ENCODE measurements at regions of chr14 and their contacts with region 1.

Region 1: DNA sequence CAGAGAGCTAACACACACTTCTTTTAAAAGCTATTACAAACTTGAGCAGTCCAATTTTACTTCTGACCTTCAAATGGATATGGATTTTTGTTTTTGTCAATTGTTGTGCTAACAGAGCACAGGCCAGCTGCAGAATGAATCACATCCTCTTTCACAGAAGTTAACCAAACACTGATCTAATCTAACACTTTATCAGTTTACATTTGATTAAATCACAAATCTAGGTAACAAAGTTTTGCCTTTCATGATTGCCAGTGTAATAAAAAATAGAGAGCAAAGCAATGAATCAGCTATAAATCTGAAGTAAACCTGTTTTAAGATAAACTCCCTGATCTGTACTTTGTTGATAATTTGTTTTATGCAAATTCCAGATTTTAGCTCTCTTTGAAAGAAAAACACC is 273.1 kb upstream of the RGS6 start:
- DNase-seq: peak; percentile 90
- H3K4me3 ChIP-seq: peak overlapping the region in 1 of 3 experiments; percentile 32
- H3K27ac ChIP-seq: peak overlapping the region; percentile 79
- H3K4me1 ChIP-seq: peaks cover 24% of the 10 kb centered on the region
- H3K27me3 ChIP-seq: no peaks in the 10 kb centered on the region
- CTCF ChIP-seq: no peak
- POLR2A ChIP-seq: no peak

Region 2: GRCh38 chr14:71539650-71540285 is 119.4 kb before region 1 on chr14:
- CTCF ChIA-PET with region 1: no interaction called
- POLR2A ChIA-PET with region 1: no interaction called
- dilution Hi-C with region 1: no loop called
- intact Hi-C with region 1: loop called (anchors 5 kb)
- DNase-seq: peak; percentile 59
- H3K4me3 ChIP-seq: no peak overlapping the region
- H3K27ac ChIP-seq: no peak overlapping the region
- H3K4me1 ChIP-seq: peaks cover 17% of the 10 kb centered on the region
- H3K27me3 ChIP-seq: no peaks in the 10 kb centered on the region
- CTCF ChIP-seq: no peak
- POLR2A ChIP-seq: no peak

Region 3: GRCh38 chr14:71692496-71692895 is 33.3 kb after region 1 on chr14:
- CTCF ChIA-PET with region 1: no interaction called
- POLR2A ChIA-PET with region 1: no interaction called
- dilution Hi-C with region 1: no loop called
- intact Hi-C with region 1: loop called (anchors 1 kb)
- DNase-seq: peak; percentile 72
- H3K4me3 ChIP-seq: no peak overlapping the region
- H3K27ac ChIP-seq: no peak overlapping the region
- H3K4me1 ChIP-seq: peaks cover 8% of the 10 kb centered on the region
- H3K27me3 ChIP-seq: no peaks in the 10 kb centered on the region
- CTCF ChIP-seq: no peak
- POLR2A ChIP-seq: no peak

Region 4: GRCh38 chr14:71739273-71739937 is 80.2 kb after region 1 on chr14:
- CTCF ChIA-PET with region 1: no interaction called
- POLR2A ChIA-PET with region 1: no interaction called
- dilution Hi-C with region 1: no loop called
- intact Hi-C with region 1: no loop called
- DNase-seq: peak; percentile 17
- H3K4me3 ChIP-seq: no peak overlapping the region
- H3K27ac ChIP-seq: no peak overlapping the region
- H3K4me1 ChIP-seq: peaks cover 6% of the 10 kb centered on the region
- H3K27me3 ChIP-seq: no peaks in the 10 kb centered on the region
- CTCF ChIP-seq: no peak
- POLR2A ChIP-seq: no peak